CD4-positive, alpha-beta T cell (primary cell): ENCODE measurements at regions of chr13 and their contacts with region 1.

Region 1: DNA sequence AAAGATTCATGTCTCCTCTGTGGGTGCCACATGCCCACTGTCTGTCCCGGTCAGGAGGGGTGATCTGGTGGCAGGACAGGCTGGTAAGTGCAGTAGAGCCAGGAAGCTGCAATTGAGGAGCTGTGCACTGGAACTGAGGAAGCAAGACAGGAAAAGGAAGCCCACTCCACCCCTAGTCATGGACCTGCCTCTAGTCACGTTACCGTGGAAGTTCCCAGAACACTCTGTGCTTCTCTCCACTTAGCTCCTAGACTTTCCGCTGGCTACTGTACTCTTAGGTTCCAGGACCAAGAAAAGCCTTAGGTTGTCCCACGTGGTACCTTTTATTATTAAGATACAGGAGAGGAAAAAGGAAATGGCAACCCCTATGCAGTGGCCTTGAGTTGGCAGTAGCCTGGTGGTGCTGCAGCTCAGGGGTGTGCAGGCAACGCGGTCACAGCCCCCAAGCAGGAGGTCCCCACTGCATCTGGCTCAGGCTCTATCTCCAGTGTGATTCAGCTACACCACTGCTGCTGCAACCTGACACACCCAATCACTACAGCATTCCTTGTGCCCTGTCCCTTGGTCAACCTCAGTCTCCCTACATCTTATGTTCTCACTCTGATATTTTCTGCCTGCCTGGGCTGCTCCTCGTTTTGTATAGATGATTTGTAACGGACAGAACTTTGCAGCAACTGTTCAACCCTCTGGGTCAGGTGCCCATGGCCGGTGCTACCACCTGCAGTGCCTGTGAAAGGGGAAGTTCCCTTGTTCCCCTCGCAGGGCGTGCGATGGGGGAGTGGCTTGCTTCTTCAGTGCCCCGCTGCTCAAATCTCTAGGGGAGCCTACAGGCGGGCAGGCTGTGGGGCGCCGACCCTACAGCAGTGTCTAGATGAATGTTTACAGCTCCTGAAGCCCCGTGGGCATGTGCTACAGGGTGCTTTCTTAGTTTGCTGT is 24.4 kb upstream of the GPR12 start:
- DNase-seq: peak in 7 of 14 experiments; percentile 4 to 30 (median 15)
- ATAC-seq: peak; percentile 30
- H3K4me3 ChIP-seq: peak overlapping the region; percentile 54
- H3K4me3 Mint-ChIP-seq: peak overlapping the region; percentile 88
- H3K27ac ChIP-seq: no peak overlapping the region
- H3K27ac Mint-ChIP-seq: peak overlapping the region; percentile 73
- H3K4me1 ChIP-seq: peaks cover 19% of the 10 kb centered on the region
- H3K4me1 Mint-ChIP-seq: peaks cover 19% of the 10 kb centered on the region
- H3K27me3 ChIP-seq: peaks cover 0 to 5% of the 10 kb centered on the region in 2 experiments
- H3K27me3 Mint-ChIP-seq: peaks cover 4% of the 10 kb centered on the region
- CTCF ChIP-seq: no peak

Region 2: GRCh38 chr13:26719356-26719945 is 65.5 kb before region 1 on chr13:
- CTCF ChIA-PET with region 1: no interaction called
- POLR2A ChIA-PET with region 1: no interaction called
- intact Hi-C with region 1: loop called in 1 of 2 experiments (anchors 5 kb)
- DNase-seq: no peak
- ATAC-seq: no peak
- H3K4me3 ChIP-seq: no peak overlapping the region
- H3K4me3 Mint-ChIP-seq: no peak overlapping the region
- H3K27ac ChIP-seq: no peak overlapping the region
- H3K27ac Mint-ChIP-seq: no peak overlapping the region
- H3K4me1 ChIP-seq: peaks cover 17% of the 10 kb centered on the region
- H3K4me1 Mint-ChIP-seq: peaks cover 28% of the 10 kb centered on the region
- H3K27me3 ChIP-seq: no peaks in the 10 kb centered on the region
- H3K27me3 Mint-ChIP-seq: no peaks in the 10 kb centered on the region
- CTCF ChIP-seq: no peak

Region 3: DNA sequence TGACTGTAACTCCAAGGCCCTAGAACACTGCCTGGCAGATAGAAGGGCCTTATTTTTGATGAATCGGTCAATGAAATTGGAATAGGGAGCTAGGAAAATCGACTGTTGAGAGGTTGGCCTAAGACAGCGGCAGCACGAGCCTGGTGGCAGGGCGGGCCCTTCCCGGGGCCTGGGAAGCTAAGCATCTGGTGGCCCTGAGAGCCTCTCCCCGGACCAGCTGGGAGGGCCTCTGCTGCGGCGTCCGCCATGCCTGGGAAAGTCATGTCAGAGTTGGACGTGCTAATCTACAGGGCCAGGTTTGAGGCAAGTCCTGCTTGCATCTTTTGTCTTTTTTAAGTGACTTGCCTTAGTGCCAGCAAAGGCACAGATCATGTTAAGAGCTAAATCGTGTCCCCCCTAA is 13.2 kb before region 1 on chr13:
- CTCF ChIA-PET with region 1: no interaction called
- POLR2A ChIA-PET with region 1: no interaction called
- intact Hi-C with region 1: no loop called
- DNase-seq: no peak
- ATAC-seq: no peak
- H3K4me3 ChIP-seq: no peak overlapping the region
- H3K4me3 Mint-ChIP-seq: no peak overlapping the region
- H3K27ac ChIP-seq: no peak overlapping the region
- H3K27ac Mint-ChIP-seq: no peak overlapping the region
- H3K4me1 ChIP-seq: no peaks in the 10 kb centered on the region
- H3K4me1 Mint-ChIP-seq: no peaks in the 10 kb centered on the region
- H3K27me3 ChIP-seq: no peaks in the 10 kb centered on the region
- H3K27me3 Mint-ChIP-seq: peaks cover 9% of the 10 kb centered on the region
- CTCF ChIP-seq: no peak